GM13976 (cell line): ENCODE measurements at regions of chr15 and their contacts with region 1.

Region 1: DNA sequence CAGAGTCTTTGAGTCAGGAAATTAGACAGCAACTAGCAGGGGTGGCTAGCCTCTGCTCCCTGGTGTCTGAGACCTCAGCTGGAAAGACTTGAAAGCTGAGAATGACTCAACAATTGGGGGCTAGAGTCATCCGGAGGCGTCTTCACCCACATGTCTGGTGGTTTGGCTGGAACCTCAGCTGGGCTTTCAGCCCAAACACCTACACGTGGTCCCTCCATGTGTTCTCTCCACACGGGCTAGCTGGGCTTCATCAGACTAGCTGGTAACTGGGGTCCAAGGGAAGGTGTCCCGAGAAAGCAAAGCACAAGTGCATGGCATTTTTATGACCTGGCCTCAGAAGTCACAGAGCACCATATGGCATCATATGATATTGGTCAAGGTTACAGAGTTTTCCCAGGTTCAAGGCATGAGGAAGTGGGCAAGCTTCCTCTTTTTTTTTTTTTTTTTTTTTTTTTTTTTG is 19.9 kb upstream of the ABHD2 start:
- DNase-seq: peak; percentile 48
- CTCF ChIP-seq: no peak

Region 2: GRCh38 chr15:88745696-88746095 is 322.7 kb before region 1 on chr15:
- in situ Hi-C with region 1: no loop called
- DNase-seq: no peak
- CTCF ChIP-seq: no peak

Region 3: DNA sequence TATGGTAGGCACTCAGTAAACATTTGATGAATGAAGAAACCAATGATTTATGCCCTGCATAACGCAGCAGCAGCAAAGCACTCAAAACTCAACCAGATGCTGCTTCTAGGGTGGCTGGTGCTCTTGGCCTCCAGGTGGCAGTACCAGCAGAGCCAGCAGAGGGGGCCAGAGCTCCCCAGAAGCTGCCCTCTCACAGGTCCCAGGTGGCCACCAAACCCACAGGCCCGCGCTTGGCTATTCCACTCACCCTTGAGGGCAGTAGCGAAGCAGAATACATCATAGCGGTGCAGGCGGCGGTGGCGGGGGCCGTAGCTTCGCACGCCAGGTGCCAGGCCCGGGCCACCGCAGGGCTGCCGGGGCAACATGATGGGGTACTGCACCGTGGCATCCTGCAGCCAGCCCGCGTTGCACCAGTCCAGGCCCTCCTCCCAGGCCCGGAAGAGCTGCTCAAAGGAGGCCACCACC is 189.6 kb before region 1 on chr15:
- in situ Hi-C with region 1: no loop called
- DNase-seq: peak; percentile 81
- CTCF ChIP-seq: peak; percentile 55

Region 4: DNA sequence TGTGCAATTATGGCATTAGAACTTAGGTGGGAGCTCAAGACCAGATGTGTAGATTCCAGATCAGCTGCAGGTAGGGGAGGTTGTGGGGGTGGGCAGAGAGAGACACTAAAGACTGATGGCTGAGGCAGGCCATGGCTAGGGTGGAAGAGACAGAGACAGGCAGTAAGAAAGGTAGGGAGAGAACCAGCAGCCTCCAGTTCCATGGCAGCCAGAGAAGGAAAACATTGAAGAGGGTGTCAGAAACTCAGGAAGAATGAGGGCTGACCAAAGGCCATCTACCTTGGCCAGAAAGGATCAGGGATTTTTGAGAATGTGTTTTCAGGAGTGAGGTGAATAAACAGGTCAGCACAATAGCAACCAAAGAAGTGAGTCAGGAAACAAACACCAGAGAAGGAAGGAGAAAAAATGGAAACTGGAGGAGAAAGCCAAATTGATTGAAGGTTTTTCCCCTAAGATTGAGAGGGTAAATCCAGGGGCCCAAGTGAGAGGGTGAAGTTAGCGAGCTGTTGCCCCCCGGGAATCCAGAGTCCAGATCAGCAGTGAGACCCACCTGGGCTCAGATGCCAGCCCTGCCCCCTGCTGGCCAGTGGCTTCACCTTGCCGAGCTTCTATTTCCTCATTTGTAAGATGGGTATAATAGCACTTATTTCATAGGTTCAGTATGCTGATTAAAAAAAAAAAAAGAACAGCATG is 60.9 kb after region 1 on chr15:
- in situ Hi-C with region 1: loop called (anchors 10 kb)
- DNase-seq: peak; percentile 57
- CTCF ChIP-seq: peak; percentile 86